Heart right ventricle (tissue), 16 donors: ENCODE measurements at regions of chr6 and their contacts with region 1.

Region 1: GRCh38 chr6:24951811-24952299 is 16.1 kb upstream of the RIPOR2 start:
- DNase-seq: no peak
- ATAC-seq: peak in 5 of 8 donors; percentile 44 to 72 (median 56)
- H3K4me3 ChIP-seq: peak overlapping the region in 1 of 10 donors; percentile 4
- H3K27ac ChIP-seq: peak overlapping the region in 1 of 10 donors; percentile 83
- H3K4me1 ChIP-seq: peaks cover 0 to 51% (median 0%) of the 10 kb centered on the region in 9 donors
- H3K27me3 ChIP-seq: no peaks in the 10 kb centered on the region
- CTCF ChIP-seq: no peak

Region 2: DNA sequence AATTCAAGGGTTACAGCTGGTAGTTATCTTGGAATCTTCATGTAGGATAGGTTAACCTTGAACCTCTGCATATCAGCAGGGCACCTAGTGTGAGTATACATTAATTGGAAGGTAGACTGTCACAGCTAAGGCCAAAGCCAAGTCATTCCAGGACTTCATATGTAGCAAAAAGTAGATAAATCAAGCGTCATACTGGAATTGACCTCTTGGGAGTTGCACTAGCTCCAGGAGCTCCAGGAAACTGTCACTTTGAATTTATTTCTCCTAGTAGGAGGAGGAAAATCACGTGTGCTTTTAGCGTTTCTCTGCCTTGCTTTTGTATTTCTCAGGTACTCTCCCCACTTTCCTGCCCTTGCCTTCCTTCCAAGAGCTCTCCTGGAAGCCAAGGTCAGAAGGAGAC is 46.4 kb before region 1 on chr6:
- intact Hi-C with region 1: loop called in 1 of 10 experiments (anchors 1 kb)
- DNase-seq: no peak
- ATAC-seq: no peak
- H3K4me3 ChIP-seq: no peak overlapping the region
- H3K27ac ChIP-seq: no peak overlapping the region
- H3K4me1 ChIP-seq: peaks cover 0 to 63% (median 27%) of the 10 kb centered on the region in 9 donors
- H3K27me3 ChIP-seq: no peaks in the 10 kb centered on the region
- CTCF ChIP-seq: no peak

Region 3: GRCh38 chr6:25006565-25007001 is 54.7 kb after region 1 on chr6:
- intact Hi-C with region 1: no loop called
- DNase-seq: peak in 1 of 2 donors; percentile 28
- ATAC-seq: peak; percentile 43 to 98 (median 88)
- H3K4me3 ChIP-seq: peak overlapping the region in 1 of 10 donors; percentile 7
- H3K27ac ChIP-seq: peak overlapping the region in 9 of 10 donors; percentile 29 to 88 (median 53)
- H3K4me1 ChIP-seq: peaks cover 0 to 89% (median 10%) of the 10 kb centered on the region in 9 donors
- H3K27me3 ChIP-seq: peaks cover 0 to 4% (median 0%) of the 10 kb centered on the region in 7 donors
- CTCF ChIP-seq: no peak

Region 4: GRCh38 chr6:25138237-25139125 is 186.6 kb after region 1 on chr6:
- intact Hi-C with region 1: no loop called
- DNase-seq: peak; percentile 29 to 76
- ATAC-seq: peak; percentile 80 to 93 (median 92)
- H3K4me3 ChIP-seq: peak overlapping the region; percentile 31 to 57 (median 49)
- H3K27ac ChIP-seq: peak overlapping the region; percentile 73 to 93 (median 88)
- H3K4me1 ChIP-seq: peaks cover 0 to 34% (median 20%) of the 10 kb centered on the region in 9 donors
- H3K27me3 ChIP-seq: no peaks in the 10 kb centered on the region
- CTCF ChIP-seq: peak in 5 of 9 donors; percentile 15 to 40 (median 25)

Region 5: GRCh38 chr6:25250878-25251277 is 299.0 kb after region 1 on chr6:
- intact Hi-C with region 1: no loop called
- DNase-seq: no peak
- ATAC-seq: no peak
- H3K4me3 ChIP-seq: no peak overlapping the region
- H3K27ac ChIP-seq: no peak overlapping the region
- H3K4me1 ChIP-seq: peaks cover 0 to 4% (median 0%) of the 10 kb centered on the region in 9 donors
- H3K27me3 ChIP-seq: no peaks in the 10 kb centered on the region
- CTCF ChIP-seq: no peak